Posterior vena cava (tissue), 2 donors: ENCODE measurements at regions of chr14 and their contacts with region 1.

Region 1: DNA sequence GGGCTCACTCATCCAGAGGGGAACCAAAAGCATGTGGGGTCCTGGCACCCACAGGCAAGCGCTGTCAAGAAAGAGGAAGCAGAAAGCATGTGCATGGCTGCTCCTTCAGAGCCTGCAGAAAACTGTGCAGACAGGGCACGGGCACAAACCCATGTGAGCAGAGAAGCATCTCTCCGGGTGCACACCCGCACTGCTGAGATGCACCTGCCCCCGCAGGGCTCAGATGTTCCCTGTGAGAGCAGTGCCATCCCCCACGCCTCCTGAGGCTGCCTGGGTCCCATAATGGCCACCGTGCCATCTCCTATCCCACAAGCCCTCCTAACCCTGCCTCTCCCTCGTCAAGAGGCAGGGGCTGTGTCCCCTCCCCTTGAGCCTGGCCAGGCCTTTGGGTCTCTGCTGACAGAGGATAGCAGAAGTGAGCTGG is 32.3 kb upstream of the INF2 start:
- DNase-seq: peak; percentile 79

Region 2: DNA sequence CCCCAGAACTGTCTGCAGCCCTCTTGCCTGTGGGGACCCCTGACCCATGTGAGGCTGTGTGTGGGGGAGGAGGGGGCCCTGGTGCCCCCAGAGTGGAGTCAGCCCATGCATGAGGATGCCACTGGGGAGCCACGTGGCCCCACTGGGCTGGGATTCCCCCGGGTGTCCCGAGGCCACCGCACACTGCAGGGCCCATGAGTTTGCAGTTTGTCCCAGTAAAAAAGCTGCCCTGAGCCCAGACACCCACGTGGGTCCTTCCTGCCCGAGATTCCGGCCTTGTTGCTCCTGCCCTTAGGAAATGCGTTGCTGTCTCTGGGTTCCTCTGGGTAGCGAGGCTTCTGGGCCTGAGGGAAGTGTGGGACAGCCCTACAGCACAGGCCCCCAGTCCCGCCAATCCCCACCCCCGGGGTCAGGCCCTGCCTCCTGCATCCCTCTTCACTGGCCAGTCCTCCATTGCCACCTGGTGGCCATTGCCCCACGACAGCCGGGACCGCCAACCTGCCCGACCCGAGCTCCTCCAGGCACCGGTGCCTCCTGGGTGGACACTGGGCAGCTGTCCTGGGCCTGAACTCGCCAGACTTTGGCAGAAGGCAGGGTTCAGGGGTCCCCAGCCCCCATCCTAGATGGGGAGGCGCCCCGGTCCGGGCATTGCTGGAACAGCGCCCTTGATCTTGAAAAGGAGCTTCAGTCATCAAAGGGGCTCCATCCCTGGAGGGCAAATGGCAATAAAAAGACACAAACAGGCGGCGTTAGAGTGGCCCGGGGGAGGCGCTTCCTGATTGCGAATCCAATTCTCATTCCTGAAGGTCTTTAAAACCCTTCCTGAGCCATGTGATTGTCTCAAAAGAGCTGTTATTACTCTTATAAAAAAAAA is 93.1 kb before region 1 on chr14:
- intact Hi-C with region 1: no loop called
- DNase-seq: peak; percentile 91

Region 3: DNA sequence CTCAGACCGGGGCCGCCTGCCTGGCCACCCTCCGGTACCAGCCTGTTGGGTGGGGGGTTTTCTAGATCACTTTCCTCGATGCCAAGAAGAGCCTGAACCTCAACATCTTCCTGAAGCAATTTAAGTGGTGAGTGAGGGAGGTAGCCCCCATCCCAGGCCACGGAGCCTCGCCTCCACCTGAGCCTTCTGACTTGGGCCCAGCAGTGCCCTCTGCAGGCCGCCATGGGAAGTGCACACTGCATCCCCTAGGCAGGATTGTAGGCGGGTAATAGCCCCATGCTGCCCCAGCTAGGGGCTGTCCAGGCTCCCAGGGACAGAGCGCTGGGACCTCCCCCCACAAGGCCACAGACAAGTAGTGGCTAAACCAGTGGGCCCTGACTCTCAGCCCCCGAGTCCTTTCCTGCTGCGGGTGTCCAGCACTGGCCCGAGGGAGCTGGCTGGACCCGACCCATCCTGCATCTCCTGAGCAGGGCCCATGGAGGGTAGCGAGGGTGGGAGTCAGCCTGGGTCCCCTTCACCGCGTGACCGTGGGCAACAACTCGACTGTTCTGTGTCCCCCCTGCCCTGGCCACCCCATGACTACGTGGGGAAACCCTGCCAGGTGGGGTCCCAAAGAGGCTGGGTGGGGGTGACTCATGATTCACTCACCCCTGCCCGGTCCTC is 51.6 kb after region 1 on chr14:
- intact Hi-C with region 1: loop called in 1 of 2 experiments (anchors 5 kb)
- DNase-seq: peak; percentile 90